Dendritic cell treated with granulocyte-macrophage colony-stimulating factor and Interleukin-4, amounts not matched to agents 40 ng/mL and 50 ng/mL, for 4 days (primary cell): ENCODE measurements at regions of chr1 and their contacts with region 1.

Region 1: DNA sequence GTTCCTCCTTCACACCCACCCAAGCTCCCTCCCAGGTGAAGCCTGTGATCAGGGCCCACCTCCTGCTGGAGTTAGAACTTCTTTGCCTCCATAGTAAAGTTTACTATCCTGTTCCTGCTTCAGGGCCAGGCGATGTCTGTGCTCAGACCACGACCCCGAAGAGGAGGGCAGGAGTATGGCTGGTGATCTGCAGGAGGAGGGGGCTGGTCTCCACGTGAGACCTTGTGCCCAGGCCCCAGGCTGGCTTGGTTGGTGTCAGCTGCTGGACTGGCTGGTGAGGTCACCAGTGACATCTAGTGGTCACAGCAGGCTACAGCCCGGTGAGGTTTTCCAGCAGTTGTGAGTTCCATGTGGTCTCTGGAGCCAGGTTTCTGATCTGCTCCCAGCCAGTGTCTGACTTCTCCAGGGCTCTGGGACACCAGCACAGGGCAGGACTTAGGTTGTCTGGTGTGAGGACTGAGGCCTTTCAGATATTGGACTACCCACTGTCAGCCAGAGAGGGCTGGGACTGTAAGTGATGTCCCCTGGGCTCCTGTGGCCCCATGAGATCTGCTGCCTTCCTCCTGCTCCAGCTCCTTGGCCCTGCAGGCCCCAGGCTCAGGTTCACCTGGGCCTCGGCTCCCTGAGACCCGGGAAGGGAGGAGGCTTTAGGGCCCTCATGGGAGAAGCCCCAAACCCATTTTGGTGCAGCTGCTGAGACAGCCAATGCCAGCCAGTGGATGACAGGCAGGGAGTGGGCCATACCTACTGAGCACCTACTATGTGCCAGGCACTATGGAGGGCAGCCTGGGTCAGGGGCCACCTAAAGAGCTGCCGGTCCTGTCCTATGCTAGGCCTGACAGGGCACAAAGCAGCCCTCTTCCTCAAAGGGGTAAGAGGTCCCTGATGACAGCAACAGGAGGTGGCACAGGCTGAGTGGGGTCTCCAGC is 6.0 kb upstream of the UBL4B start:
- H3K4me3 Mint-ChIP-seq: no peak overlapping the region
- H3K27ac Mint-ChIP-seq: no peak overlapping the region
- H3K4me1 Mint-ChIP-seq: peaks cover 13% of the 10 kb centered on the region
- H3K27me3 Mint-ChIP-seq: peaks cover 16% of the 10 kb centered on the region

Region 2: DNA sequence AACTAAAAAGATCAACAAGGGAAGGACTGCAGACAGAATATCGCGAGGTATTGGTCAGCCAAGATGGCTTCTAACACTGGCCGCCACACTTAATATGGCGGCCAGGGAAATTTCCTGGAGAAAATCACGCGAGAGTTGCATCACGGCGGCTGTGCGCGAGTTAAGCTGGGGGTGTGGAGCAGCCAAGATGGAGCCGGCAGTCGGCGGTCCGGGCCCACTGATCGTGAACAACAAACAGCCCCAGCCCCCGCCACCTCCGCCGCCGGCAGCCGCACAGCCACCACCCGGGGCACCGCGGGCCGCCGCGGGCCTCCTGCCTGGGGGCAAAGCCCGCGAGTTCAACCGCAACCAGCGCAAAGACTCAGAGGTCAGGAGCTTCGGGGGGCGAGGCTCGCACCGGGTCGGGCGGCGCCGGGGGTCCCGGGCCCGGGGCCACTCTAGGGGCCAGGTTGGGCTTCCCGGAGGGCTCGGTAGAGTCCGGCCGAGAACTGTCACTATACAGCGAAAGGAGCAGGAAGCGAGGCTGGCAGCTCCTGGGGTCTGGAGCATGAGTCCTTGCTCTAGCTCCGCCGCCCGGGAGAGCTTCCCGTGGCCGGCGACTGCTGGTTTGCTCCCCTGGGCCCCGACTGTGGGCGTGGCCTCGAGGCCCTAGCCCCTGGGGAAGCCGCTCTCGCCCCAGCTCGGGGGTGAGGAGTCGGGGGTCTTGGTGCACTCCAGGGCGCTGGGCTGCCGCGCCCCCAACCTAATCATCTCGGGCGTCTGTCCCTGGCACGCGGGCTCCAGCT is 71.6 kb before region 1 on chr1 and contains the start of gene STRIP1:
- intact Hi-C with region 1: loop called (anchors 1 kb)
- H3K4me3 Mint-ChIP-seq: peak within 1 kb of the TSS; percentile 91
- H3K27ac Mint-ChIP-seq: peak within 1 kb of the TSS; percentile 93
- H3K4me1 Mint-ChIP-seq: peaks cover 39% of the 10 kb centered on the region
- H3K27me3 Mint-ChIP-seq: no peaks in the 10 kb centered on the region

Region 3: DNA sequence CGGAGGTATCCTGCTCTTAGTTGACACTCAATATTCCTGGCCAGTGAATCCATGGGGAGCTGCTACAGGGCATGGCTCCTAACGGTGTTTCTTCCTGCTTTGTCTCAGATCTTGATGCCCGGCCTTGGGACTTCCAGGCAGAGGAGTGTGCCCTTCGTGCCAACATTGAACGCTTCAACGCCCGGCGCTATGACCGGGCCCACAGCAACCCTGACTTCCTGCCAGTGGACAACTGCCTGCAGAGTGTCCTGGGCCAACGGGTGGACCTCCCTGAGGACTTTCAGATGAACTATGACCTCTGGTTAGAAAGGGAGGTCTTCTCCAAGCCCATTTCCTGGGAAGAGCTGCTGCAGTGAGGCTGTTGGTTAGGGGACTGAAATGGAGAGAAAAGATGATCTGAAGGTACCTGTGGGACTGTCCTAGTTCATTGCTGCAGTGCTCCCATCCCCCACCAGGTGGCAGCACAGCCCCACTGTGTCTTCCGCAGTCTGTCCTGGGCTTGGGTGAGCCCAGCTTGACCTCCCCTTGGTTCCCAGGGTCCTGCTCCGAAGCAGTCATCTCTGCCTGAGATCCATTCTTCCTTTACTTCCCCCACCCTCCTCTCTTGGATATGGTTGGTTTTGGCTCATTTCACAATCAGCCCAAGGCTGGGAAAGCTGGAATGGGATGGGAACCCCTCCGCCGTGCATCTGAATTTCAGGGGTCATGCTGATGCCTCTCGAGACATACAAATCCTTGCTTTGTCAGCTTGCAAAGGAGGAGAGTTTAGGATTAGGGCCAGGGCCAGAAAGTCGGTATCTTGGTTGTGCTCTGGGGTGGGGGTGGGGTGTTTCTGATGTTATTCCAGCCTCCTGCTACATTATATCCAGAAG is 52.5 kb before region 1 on chr1:
- intact Hi-C with region 1: loop called (anchors 1 kb)
- H3K4me3 Mint-ChIP-seq: no peak overlapping the region
- H3K27ac Mint-ChIP-seq: no peak overlapping the region
- H3K4me1 Mint-ChIP-seq: peaks cover 18% of the 10 kb centered on the region
- H3K27me3 Mint-ChIP-seq: no peaks in the 10 kb centered on the region